ENCODE measurements at regions of chr19 and their contacts with region 1.

Region 1: DNA sequence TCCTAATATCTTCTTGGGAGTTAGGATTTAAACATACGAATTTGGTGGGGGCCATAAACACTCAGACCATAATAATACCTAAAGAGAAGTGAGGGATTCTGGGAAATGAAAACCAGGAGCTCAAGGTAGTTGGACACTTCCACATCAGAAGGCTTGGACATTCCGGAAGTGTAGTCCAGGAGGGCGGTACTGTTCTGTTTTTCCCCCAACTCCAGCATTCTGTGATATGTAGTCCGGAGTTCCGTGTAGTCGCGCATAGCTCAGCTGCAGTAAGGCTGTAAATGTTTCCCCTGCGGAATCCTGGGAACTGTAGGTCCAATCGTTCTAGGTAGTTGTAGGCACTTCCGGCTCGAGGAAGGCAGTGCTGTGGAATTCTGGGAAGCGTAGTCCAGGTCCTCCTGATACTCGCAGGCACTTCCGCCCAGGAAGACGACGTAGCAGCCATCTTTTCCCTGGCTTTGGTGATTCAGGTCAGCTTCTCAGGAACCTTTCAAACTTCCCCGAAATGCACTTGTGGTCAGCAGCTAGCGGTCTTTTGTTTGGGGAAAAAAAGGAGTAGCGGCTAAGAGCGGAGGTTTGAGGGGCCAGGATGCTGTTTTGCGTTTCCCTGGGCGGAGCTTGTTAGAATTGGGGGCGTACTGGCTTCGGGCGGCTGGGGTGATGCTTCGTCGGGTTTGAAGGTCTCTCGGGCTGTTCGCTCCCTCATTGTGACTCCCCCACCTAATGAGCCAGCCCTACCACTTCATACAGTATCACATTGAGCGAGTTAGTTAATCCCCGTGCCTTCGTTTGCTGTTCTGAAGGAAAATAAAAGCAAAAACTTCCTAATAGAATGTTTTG is at the start of gene ZNF226:
- DNase-seq: peak; percentile 96
- H3K4me3 ChIP-seq: peak within 1 kb of the TSS; percentile 79
- H3K27ac ChIP-seq: peak within 1 kb of the TSS; percentile 48
- H3K4me1 ChIP-seq: peaks cover 15% of the 10 kb centered on the region
- CTCF ChIP-seq: no peak
- total RNA-seq, gene ZNF226: 14.6 and 14.7 TPM in 2 replicates

Region 2: DNA sequence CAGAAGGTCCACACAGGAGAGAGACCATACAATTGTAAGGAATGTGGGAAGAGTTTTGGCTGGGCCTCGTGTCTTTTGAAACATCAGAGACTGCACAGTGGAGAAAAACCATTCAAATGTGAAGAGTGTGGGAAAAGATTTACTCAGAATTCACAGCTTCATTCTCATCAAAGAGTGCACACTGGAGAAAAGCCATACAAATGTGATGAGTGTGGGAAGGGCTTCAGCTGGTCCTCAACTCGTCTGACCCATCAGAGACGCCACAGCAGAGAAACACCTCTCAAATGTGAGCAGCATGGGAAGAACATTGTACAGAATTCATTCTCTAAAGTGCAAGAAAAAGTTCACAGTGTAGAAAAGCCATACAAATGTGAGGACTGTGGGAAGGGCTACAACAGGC is 57.1 kb before region 1 on chr19:
- CTCF ChIA-PET with region 1: no interaction called
- POLR2A ChIA-PET with region 1: interaction called, 4 read pairs
- intact Hi-C with region 1: loop called (anchors 2 kb)
- DNase-seq: no peak
- H3K4me3 ChIP-seq: no peak overlapping the region
- H3K27ac ChIP-seq: no peak overlapping the region
- H3K4me1 ChIP-seq: peaks cover 8% of the 10 kb centered on the region
- CTCF ChIP-seq: no peak

Region 3: GRCh38 chr19:44207126-44207803 is 42.4 kb after region 1 on chr19:
- CTCF ChIA-PET with region 1: interaction called, 3 read pairs
- POLR2A ChIA-PET with region 1: interaction called, 7 read pairs
- intact Hi-C with region 1: loop called (anchors 2 kb)
- DNase-seq: peak; percentile 95
- H3K4me3 ChIP-seq: peak overlapping the region; percentile 82
- H3K27ac ChIP-seq: peak overlapping the region; percentile 6
- H3K4me1 ChIP-seq: peaks cover 5% of the 10 kb centered on the region
- CTCF ChIP-seq: no peak

Region 4: GRCh38 chr19:44236384-44236783 is 71.5 kb after region 1 on chr19:
- CTCF ChIA-PET with region 1: no interaction called
- POLR2A ChIA-PET with region 1: no interaction called
- intact Hi-C with region 1: no loop called
- DNase-seq: no peak
- H3K4me3 ChIP-seq: no peak overlapping the region
- H3K27ac ChIP-seq: no peak overlapping the region
- H3K4me1 ChIP-seq: no peaks in the 10 kb centered on the region
- CTCF ChIP-seq: no peak

Region 5: DNA sequence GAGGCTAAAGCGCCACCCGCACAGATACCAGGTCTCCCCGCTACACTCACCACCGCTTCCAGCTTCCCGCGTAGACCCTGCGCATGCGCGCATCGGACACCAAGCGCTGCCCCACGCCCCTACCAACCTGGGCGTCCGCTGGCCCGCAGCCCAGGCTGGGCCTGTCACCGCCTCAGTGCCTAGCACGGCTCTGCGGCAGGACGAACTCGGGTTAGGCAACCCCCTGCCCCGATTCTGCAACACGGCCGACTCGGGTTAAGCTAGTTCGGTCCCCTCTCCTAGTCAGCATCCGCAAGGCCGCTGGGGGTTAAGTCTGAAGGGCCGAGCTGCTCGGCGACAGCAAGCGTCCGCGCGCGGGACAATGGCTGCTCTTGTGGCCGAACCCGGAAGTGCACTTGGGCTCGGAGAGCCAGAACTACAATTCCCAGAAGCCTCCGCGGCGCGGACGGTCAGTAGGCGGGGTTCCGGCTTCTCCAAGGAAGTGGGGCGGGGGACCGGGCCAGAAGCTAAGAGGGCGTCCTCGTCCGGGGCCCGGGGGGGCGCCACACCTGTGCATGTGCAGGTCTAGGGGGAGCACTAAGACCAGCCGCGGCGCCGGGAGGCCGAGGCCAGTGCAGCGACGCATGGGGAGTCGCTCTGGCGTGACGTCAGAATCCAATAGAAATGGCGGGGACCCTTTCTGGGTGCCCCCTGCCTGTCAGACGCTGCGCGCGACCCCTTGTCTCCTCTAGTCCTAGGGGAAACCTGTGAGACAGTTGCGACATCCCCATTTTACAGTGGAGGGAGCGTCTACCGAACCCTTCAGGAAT is 335.5 kb after region 1 on chr19 and contains the start of gene ZNF180:
- CTCF ChIA-PET with region 1: no interaction called
- POLR2A ChIA-PET with region 1: no interaction called
- intact Hi-C with region 1: loop called (anchors 1 kb)
- DNase-seq: peak; percentile 98
- H3K4me3 ChIP-seq: peak within 1 kb of the TSS; percentile 86
- H3K27ac ChIP-seq: peak within 1 kb of the TSS; percentile 52
- H3K4me1 ChIP-seq: peaks cover 9% of the 10 kb centered on the region
- CTCF ChIP-seq: peak; percentile 64
- total RNA-seq, gene ZNF180: 11.8 and 14.2 TPM in 2 replicates

Measured in OCI-LY7 (cell line).